ENCODE measurements at regions of chr6 and their contacts with region 1.

Region 1: GRCh38 chr6:26065952-26066380 is 21.3 kb upstream of the HFE start:
- H3K4me3 ChIP-seq: no peak overlapping the region
- H3K27ac ChIP-seq: no peak overlapping the region
- H3K4me1 ChIP-seq: no peaks in the 10 kb centered on the region
- CTCF ChIP-seq: peak; percentile 46

Region 2: GRCh38 chr6:25726122-25726911 is 339.6 kb before region 1 on chr6:
- CTCF ChIA-PET with region 1: no interaction called
- POLR2A ChIA-PET with region 1: no interaction called
- H3K4me3 ChIP-seq: no peak overlapping the region
- H3K27ac ChIP-seq: no peak overlapping the region
- H3K4me1 ChIP-seq: no peaks in the 10 kb centered on the region
- CTCF ChIP-seq: no peak

Region 3: DNA sequence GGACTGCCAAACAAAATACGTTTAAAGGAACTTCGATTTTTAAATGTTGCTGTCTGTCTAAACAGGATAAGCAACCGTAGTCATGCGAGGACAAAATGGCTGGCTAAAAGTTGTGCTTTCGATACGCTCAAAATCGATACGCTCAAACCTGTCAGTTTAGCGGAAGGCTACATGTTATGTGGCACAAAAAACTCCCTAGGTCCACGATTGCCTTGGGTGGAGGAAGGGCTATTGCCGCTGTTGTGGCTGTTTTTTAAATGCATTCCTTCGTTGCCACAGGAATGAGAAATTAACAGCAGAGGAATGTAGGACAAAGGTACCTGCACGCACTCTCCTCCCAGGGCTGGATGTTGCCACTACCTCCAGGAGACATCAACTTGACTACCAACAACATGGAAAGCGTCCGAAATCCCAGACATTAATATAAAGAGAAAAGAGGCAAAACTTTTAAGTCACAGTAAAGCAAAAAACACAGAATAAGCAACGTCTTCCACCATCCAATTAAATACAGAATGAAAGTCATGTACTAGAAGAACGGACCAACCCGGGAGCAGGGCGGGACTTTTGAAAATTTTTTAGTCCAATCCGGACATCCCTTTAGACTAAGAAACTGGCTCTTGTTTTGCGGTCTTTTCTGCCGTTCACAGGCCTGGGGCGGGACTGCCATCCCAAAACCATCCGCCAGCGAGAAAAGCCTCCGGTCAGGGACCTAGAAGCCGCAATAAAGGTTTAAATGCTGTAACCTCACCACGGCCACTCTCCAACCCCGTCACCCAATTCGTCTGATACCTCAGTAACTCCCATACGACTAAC is 10.9 kb before region 1 on chr6:
- CTCF ChIA-PET with region 1: interaction called, 34 read pairs
- POLR2A ChIA-PET with region 1: interaction called, 4 read pairs
- H3K4me3 ChIP-seq: peak overlapping the region; percentile 85
- H3K27ac ChIP-seq: peak overlapping the region; percentile 81
- H3K4me1 ChIP-seq: peaks cover 5% of the 10 kb centered on the region; the same call in 1 of the 2 replicates
- CTCF ChIP-seq: no peak

Region 4: DNA sequence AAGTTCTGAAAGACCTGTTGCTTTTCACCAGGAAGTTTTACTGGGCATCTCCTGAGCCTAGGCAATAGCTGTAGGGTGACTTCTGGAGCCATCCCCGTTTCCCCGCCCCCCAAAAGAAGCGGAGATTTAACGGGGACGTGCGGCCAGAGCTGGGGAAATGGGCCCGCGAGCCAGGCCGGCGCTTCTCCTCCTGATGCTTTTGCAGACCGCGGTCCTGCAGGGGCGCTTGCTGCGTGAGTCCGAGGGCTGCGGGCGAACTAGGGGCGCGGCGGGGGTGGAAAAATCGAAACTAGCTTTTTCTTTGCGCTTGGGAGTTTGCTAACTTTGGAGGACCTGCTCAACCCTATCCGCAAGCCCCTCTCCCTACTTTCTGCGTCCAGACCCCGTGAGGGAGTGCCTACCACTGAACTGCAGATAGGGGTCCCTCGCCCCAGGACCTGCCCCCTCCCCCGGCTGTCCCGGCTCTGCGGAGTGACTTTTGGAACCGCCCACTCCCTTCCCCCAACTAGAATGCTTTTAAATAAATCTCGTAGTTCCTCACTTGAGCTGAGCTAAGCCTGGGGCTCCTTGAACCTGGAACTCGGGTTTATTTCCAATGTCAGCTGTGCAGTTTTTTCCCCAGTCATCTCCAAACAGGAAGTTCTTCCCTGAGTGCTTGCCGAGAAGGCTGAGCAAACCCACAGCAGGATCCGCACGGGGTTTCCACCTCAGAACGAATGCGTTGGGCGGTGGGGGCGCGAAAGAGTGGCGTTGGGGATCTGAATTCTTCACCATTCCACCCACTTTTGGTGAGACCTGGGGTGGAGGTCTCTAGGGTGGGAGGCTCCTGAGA is 21.5 kb after region 1 on chr6 and contains the start of gene HFE:
- CTCF ChIA-PET with region 1: interaction called, 724 read pairs
- POLR2A ChIA-PET with region 1: interaction called, 3 read pairs
- H3K4me3 ChIP-seq: peak within 1 kb of the TSS; percentile 38
- H3K27ac ChIP-seq: no peak within 1 kb of the TSS
- H3K4me1 ChIP-seq: no peaks in the 10 kb centered on the region
- CTCF ChIP-seq: 0 out of 2 replicates have a peak, but pooled peaks have one; percentile 24

Region 5: DNA sequence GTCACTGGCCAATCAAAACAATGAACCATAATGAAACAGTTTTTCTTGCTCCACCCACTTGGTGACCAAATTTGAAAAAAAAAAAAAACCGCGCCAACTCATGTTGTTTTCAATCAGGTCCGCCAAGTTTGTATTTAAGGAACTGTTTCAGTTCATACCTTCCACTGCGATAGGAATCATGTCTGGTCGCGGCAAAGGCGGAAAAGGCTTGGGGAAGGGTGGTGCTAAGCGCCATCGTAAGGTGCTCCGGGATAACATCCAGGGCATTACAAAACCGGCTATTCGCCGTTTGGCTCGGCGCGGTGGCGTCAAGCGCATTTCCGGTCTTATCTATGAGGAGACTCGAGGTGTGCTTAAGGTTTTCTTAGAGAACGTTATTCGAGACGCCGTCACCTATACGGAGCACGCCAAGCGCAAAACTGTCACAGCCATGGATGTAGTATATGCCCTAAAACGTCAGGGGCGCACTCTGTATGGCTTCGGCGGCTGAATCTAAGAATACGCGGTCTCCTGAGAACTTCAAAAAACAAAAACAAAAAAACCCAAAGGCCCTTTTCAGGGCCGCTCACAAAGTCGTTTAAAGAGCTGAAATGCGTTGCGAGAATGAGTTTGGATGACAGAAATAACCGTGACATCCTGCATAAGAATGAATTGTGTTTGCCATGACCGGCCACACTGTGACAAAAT is 37.9 kb after region 1 on chr6:
- CTCF ChIA-PET with region 1: interaction called, 724 read pairs
- POLR2A ChIA-PET with region 1: interaction called, 12 read pairs
- H3K4me3 ChIP-seq: peak overlapping the region; percentile 49
- H3K27ac ChIP-seq: peak overlapping the region; percentile 4; the same call in 1 of the 2 replicates
- H3K4me1 ChIP-seq: peaks cover 6% of the 10 kb centered on the region; the same call in 1 of the 2 replicates
- CTCF ChIP-seq: peak; percentile 60

Region 6: DNA sequence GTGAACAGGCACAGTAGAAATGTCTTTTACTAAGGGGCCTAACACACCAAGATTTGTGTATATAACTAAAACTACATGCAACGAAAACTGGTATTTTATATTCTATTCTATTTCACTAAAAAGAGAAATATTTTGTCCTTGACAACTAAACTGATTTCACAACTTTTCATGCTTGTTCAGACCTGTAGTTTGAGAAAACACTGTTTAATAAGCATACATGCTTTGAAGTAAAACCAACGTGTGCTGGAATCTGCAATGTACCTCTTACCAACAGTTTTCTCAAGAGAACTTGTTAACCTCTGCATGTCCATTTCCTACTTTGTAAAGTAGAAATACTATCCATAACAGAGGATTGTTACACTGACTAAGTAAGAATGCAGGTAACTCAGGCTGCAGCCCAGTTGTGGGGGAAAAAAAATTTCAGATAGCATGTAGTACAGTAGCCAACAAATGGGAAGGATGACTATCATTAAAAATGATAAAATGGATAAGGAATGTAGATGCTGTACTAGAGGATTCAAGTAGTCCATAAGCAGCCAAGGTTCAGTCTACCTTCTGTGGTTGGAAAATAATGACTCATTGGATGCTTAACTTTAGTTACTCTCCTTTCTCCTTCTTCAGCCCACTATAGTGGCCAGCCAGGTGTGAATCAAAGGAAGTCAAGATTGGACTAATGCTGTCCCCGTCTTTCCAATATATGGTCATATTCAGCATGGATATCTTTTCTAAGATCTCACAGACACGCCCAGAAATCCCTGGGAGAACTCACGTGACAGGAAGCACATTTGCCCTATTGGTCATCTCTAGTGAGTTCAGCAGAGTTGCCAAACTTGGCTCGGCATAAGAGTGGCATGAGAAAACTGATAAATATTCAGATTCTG is 86.5 kb after region 1 on chr6:
- CTCF ChIA-PET with region 1: no interaction called
- POLR2A ChIA-PET with region 1: no interaction called
- H3K4me3 ChIP-seq: no peak overlapping the region
- H3K27ac ChIP-seq: no peak overlapping the region
- H3K4me1 ChIP-seq: no peaks in the 10 kb centered on the region
- CTCF ChIP-seq: no peak